Cardiac septum (tissue), 1 donor: ENCODE measurements at regions of chr16 and their contacts with region 1.

Region 1: GRCh38 chr16:10509534-10510025 is 70.8 kb downstream of the EMP2 start:
- DNase-seq: no peak

Region 2: DNA sequence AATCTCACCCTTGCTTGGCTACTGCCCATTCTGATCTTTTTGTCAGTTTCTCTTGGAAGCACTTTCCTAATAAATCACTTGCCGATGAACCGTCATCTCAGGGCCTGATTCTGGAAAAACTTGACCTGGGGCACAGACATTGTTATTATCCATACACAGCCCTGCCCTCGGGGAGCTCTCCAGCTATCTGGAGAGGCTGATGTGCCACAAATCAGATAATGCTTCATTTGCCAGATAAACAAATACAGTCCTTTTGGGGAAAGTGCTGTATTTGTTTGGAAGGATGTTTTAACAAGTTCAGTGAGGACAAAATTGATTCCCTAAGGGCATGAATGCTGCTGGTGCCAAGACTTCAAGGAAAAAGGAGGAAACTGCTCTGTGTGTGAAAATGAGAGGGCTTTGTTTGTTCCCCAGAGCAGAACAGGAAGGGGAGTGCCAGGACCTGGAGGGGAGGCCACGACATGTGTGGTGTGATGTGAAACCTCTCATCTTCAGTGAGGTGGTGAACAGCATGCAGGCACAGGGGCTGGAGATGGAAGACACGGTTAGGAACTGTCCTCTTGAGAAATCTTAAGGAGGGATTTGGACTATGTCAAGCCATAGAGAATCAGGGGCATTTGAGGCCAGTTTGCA is 280.9 kb before region 1 on chr16:
- intact Hi-C with region 1: no loop called
- DNase-seq: no peak

Region 3: GRCh38 chr16:10256784-10257641 is 252.6 kb before region 1 on chr16:
- intact Hi-C with region 1: loop called (anchors 2 kb)
- DNase-seq: no peak

Region 4: GRCh38 chr16:10314811-10315210 is 194.8 kb before region 1 on chr16:
- intact Hi-C with region 1: loop called (anchors 2 kb)
- DNase-seq: no peak

Region 5: DNA sequence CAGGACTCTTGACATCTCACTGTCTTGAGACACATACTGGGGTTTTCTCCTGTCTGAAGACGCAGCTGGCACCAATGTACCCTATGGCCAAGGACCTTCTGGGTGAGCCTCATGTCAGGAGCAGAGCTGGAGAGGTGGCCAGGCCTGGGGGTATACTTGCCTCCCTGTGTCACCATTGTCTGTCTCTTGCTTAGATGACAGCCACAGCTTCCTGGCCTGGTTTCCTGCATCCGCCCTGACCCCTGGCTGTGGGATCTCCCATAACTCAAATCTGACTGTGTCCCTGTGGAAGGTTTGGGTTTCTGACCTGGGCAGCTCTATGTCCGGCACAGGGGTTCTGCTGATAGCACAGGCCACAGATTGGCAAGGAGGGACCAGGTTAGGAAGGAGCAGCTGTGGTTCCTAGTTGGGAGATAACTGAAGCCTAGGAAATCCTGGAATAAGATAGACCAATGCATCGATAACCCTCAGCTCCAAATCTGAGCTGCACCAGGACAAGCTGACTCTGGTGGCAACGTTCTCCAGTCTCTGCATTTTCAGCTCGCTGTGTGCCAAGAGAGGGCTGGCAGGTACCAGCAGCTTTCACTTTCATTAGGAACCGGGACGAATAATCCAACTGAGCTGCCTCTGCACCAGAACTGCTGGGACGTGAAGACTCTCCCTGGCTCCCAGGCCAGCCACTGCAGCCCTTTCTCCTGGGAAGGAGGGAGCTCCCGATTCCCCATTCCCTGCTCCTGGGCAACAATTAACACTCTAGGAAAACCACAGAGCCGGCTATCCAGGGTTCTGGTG is 427.7 kb after region 1 on chr16:
- intact Hi-C with region 1: no loop called
- DNase-seq: no peak

Region 6: DNA sequence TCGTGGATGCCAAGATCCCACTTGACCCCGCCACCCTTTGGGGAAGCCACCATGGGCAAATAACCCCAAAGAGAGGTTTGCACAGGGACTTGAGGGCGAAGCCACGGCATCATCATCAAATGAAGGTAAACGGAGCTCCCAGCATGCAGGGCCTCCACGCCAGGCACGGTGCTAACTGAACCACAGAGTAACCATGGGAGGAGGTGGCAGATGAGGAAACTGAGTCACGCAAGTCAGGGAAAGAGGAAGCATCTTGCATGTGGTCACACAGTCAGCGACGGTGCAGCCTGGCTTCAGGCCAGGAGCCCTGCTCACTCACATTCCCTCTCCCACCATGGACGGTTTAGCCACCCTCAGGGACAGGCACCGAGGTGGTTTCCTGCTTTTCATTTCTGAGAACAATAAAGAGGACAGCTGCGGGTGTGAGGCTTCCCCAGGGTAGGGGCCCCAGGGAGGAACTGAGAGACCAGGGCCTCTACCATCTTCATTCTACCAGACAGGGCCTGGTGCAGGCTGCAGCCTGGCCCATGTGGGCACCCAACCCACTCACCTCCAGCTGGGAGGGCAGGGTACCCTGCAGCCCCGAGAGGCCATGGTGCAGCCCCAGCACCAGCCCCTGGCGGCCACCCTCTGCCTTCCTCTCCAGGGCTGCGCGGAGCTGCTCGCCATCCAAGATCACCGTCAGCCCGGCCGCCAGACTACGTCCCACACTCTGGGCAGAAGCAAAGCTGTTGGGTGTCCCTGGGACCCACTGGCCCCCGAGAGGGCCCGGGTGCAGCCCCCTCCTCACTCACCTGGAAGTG is 913.9 kb after region 1 on chr16:
- intact Hi-C with region 1: no loop called
- DNase-seq: no peak